ENCODE measurements at regions of chr15 and their contacts with region 1.

Region 1: DNA sequence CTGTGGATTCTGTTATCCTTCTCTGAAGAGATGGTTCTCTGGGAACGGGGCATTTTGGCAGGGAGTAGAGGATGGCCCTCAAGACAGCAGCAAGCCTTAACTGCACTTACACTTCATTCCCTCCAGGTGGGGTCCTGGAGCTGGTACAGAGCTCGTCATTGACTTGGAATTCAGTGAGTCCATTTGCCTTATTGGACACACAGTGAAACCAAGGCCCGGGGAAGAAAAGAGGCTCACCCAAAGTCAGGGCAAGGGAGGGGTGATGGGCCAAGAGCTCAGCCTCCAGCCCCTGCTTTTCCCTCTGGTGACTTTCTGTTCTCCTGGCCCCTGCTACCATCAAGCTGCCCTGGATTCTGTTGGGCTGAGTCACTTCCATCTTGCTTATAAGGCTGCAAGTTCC is 125.6 kb downstream of the ETFA start:
- DNase-seq: no peak
- ATAC-seq: peak; percentile 39 to 66 (median 54)
- H3K4me3 ChIP-seq: no peak overlapping the region
- H3K27ac ChIP-seq: peak overlapping the region; percentile 46
- H3K4me1 ChIP-seq: peaks cover 33% of the 10 kb centered on the region
- H3K27me3 ChIP-seq: no peaks in the 10 kb centered on the region
- CTCF ChIP-seq: peak; percentile 36

Region 2: DNA sequence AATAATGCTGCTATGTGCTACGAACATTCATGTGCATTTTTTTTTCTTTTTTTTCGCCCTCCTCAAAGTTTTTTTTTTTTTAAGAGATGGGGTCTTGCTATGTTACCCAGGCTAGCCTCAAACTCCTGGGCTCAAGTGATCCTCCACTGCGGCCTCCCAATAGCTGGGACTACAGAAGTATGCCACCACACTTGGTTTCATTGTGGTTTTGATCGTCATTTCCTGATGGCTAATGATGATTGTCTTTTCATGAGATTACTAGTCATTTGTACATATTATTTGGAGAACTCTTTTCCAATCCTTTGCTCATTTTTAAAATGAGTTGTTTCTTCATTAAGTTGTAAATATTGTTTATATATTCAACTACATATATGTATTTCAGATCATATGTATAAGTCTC is 233.2 kb before region 1 on chr15:
- intact Hi-C with region 1: no loop called
- DNase-seq: no peak
- ATAC-seq: no peak
- H3K4me3 ChIP-seq: no peak overlapping the region
- H3K27ac ChIP-seq: no peak overlapping the region
- H3K4me1 ChIP-seq: no peaks in the 10 kb centered on the region
- H3K27me3 ChIP-seq: no peaks in the 10 kb centered on the region
- CTCF ChIP-seq: no peak

Region 3: DNA sequence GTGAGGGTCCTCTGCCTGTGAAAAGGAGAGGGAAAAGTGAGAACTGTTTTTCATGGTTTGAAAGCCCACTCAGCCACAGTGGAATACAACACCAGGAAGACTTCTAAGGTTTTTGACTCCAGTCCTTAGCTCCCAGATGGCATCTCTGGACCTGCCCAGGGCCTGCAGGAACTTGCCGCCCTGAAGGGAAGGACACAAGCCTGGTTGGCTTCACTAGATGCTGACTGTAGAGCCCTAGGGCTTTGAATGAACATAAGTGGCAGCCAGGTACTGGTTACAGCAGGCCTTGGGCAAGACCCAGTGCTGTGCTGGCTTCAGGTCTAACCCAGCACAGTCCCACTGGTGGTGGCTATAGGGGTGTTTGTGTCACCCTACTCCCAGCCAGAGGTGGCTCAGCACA is 147.2 kb before region 1 on chr15:
- intact Hi-C with region 1: no loop called
- DNase-seq: no peak
- ATAC-seq: no peak
- H3K4me3 ChIP-seq: no peak overlapping the region
- H3K27ac ChIP-seq: no peak overlapping the region
- H3K4me1 ChIP-seq: no peaks in the 10 kb centered on the region
- H3K27me3 ChIP-seq: no peaks in the 10 kb centered on the region
- CTCF ChIP-seq: no peak

Region 4: GRCh38 chr15:76115888-76116885 is 69.5 kb before region 1 on chr15:
- intact Hi-C with region 1: no loop called
- DNase-seq: no peak
- ATAC-seq: no peak
- H3K4me3 ChIP-seq: no peak overlapping the region
- H3K27ac ChIP-seq: no peak overlapping the region
- H3K4me1 ChIP-seq: no peaks in the 10 kb centered on the region
- H3K27me3 ChIP-seq: no peaks in the 10 kb centered on the region
- CTCF ChIP-seq: no peak

Region 5: DNA sequence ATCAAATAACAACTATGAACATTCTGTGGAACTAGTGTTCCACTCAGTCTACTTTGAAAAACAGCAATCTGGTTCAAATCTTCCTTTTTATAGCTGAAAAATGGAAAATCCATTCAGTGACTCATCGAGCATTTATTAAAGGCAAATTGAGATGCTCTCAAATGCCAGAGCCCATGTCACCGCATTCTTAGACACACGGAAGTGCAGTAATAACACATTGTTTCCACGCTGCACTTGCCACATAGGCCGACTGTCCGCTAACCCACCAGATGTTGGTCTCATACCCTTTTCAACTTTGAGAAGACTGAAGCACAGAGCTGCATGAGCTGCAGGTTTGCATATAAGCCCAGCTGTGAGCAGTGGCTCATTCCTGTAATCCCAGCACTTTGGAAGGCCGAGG is 30.0 kb before region 1 on chr15:
- intact Hi-C with region 1: loop called in 1 of 2 experiments (anchors 2 kb)
- DNase-seq: peak in 1 of 2 donors; percentile 12
- ATAC-seq: no peak
- H3K4me3 ChIP-seq: no peak overlapping the region
- H3K27ac ChIP-seq: no peak overlapping the region
- H3K4me1 ChIP-seq: peaks cover 22% of the 10 kb centered on the region
- H3K27me3 ChIP-seq: no peaks in the 10 kb centered on the region
- CTCF ChIP-seq: no peak

Region 6: DNA sequence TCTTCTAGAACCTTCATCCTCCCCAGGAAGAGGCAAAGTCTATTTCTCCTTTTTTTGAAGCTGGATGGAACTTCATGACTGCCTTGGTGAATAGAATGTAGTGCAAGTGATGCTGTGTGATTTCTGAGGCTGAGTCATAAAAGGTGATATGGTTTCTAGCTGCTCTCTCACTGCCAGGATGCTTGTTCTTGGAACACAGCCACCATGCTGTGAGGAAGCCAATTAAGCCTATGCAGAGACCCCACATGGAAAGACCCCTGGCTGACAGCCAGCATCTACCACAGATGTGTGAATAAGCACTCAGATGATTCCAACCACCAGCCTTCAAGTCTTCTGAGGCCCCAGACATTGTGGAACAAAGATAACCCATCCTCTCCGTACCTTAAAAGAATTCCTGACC is 207.9 kb after region 1 on chr15:
- intact Hi-C with region 1: no loop called
- DNase-seq: no peak
- ATAC-seq: no peak
- H3K4me3 ChIP-seq: no peak overlapping the region
- H3K27ac ChIP-seq: no peak overlapping the region
- H3K4me1 ChIP-seq: no peaks in the 10 kb centered on the region
- H3K27me3 ChIP-seq: no peaks in the 10 kb centered on the region
- CTCF ChIP-seq: no peak

Measured in psoas muscle (tissue), 8 donors.